A673 (cell line): ENCODE measurements at regions of chr6 and their contacts with region 1.

Region 1: DNA sequence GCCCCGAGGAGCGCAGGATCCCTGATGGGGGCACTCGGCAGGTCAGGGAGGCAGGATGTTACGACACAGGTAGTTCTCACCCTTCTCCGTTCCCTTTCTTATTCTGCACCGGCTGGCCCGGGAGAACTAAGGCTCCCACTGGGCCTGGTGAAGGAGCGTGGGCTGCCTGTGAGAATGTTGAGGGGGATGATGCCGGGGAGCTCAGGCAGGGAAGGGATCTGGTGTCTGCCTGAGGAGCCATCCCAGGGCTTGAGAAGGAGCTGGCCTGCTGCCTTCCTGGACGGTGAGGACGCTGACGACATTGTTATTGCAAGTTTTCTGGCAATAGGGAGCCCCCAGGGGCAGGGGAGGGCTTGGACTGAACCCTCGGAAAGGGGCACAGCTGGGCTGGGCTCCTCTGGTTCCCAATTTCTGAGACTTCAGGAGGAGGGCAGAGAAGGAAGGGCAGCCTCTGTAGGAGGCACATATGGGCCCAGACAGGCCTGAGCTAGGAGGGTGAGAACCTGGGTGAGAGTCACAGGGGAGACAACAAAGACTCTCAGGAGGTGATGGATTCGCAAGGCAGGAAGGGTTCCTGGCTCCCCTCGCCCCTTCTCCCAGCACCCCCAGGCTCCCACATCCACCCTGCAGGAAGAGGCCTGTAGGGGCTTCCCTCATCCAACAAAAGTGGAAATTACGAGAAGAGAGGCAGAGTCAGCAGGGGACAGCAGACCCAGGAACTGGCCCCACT is 32.8 kb downstream of the CYP21A2 start:
- DNase-seq: no peak
- H3K4me3 ChIP-seq: no peak overlapping the region
- H3K27ac ChIP-seq: no peak overlapping the region
- H3K4me1 ChIP-seq: no peaks in the 10 kb centered on the region
- H3K27me3 ChIP-seq: no peaks in the 10 kb centered on the region
- CTCF ChIP-seq: no peak

Region 2: GRCh38 chr6:31383149-31383548 is 687.8 kb before region 1 on chr6:
- CTCF ChIA-PET with region 1: no interaction called
- POLR2A ChIA-PET with region 1: no interaction called
- intact Hi-C with region 1: no loop called
- DNase-seq: no peak
- H3K4me3 ChIP-seq: no peak overlapping the region
- H3K27ac ChIP-seq: no peak overlapping the region
- H3K4me1 ChIP-seq: no peaks in the 10 kb centered on the region
- H3K27me3 ChIP-seq: peaks cover 22% of the 10 kb centered on the region
- CTCF ChIP-seq: no peak

Region 3: DNA sequence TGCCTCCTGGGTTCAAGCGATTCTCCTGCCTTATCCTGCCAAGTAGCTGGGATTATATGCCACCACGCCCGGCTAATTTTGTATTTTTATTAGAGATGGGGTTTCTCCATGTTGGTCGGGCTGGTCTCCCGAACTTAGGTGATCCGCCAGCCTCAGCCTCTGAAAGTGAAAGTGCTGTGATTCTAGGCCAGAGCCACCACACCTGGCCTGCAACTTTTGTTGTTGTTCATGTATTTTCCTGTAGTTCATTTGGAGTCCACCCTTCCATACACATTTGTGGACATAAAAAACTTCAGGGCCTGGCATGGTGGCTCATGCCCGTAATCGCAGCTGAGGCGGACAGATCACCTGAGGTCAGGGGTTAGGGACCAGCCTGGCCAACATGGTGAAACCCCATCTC is 228.9 kb before region 1 on chr6:
- CTCF ChIA-PET with region 1: no interaction called
- POLR2A ChIA-PET with region 1: interaction called, 12 read pairs
- intact Hi-C with region 1: no loop called
- DNase-seq: no peak
- H3K4me3 ChIP-seq: no peak overlapping the region
- H3K27ac ChIP-seq: no peak overlapping the region
- H3K4me1 ChIP-seq: peaks cover 12% of the 10 kb centered on the region
- H3K27me3 ChIP-seq: no peaks in the 10 kb centered on the region
- CTCF ChIP-seq: no peak

Region 4: DNA sequence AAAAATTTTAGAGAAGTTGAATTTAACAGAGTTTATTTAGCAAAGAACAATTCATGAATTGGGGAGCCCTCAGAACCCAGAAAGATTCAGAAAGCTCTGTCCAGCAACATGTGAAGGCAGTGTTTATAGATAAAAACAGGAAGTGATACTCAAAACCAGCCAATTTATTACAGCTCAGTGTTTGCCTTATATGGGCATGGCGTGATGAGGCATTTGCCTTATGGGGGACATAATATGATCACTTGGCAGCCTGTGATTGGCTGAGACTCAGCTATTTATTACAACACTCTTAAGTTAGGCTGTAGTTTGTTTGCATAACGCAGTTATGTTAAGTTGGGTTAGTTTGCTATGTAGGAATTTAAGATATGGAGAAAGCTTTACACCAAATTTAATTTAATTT is 991.0 kb after region 1 on chr6:
- CTCF ChIA-PET with region 1: no interaction called
- POLR2A ChIA-PET with region 1: no interaction called
- intact Hi-C with region 1: no loop called
- DNase-seq: peak; percentile 46
- H3K4me3 ChIP-seq: no peak overlapping the region
- H3K27ac ChIP-seq: no peak overlapping the region
- H3K4me1 ChIP-seq: no peaks in the 10 kb centered on the region
- H3K27me3 ChIP-seq: peaks cover 10% of the 10 kb centered on the region
- CTCF ChIP-seq: no peak